Heart left ventricle (tissue), 16 donors: ENCODE measurements at regions of chr13 and their contacts with region 1.

Region 1: DNA sequence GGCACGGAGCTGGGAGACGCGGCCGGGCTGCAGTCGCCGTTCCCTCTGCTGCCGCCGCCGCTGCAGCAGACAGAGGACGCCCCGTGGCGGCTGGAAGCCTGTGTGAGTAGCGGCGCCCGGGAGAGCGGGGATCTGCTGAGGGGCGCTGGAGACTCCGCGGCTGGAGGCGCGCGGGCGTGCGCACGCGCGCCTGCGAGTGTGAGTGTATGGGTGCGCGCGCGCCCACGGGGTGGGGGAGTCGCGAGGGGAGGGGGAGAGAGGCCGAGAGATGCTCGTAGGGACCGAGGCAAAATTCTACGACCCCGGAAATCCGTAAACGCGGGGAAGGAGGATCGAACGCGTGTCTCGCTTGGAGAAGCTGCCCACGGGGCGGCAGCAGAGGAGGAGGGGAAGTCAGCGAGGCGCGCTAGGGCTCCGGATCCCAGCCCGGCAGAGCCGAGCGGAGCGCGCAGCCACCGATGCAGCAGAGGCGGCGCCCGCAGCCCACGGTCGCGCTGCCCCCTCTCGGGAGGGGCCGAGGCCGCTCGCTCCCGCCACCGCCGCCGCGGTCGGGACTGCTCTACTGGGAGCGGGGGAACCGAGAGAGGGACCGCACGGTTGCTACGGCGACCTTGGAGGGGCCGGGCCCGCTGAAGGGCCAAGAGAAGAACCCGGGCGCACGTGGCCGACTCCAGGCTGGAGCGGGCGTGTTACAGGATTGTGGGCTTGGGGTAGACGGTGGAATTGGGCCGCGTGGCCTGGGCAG is at the start of gene ENOX1:
- DNase-seq: peak; percentile 68 to 87 (median 81)
- ATAC-seq: peak; percentile 57 to 85 (median 84)
- H3K4me3 ChIP-seq: peak within 1 kb of the TSS; percentile 39 to 86 (median 70)
- H3K27ac ChIP-seq: peak within 1 kb of the TSS; percentile 35 to 88 (median 82)
- H3K4me1 ChIP-seq: peaks cover 0 to 38% (median 9%) of the 10 kb centered on the region in 12 donors
- H3K27me3 ChIP-seq: peaks cover 0 to 35% (median 0%) of the 10 kb centered on the region in 9 donors
- CTCF ChIP-seq: peak in 10 of 12 donors; percentile 5 to 49 (median 34)
- POLR2A ChIP-seq: no peak
- total RNA-seq, gene ENOX1: 3.7 to 10.1 (median 5.5) TPM

Region 2: DNA sequence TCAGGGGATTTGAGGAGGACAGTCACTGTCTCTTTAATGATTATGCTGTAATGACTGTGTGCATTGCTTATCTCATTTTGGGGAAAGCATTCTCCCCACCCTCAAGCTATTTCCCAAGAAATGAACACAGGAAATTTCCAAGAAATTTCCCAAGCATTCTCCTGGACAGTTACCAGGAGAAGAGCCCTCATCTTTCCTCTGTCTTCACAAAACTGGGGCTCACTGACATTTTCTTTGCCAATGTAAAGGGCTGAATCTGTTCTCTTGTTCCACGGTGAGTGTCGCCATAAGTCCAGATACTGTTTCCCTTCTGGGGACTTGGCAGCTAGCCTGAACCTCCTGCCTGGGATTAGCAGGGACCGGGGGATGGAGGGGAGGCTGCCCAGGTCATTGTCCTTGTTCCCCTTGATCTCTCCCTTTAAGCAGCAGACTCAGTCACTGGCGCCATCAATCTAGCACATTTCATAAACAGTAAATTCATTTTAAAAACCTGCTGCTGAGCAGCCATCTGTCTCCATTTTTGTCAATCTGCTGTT is 590.8 kb before region 1 on chr13:
- intact Hi-C with region 1: loop called in 3 of 10 experiments (anchors 5 to 10 kb)
- DNase-seq: peak in 4 of 5 donors; percentile 60 to 73 (median 60)
- ATAC-seq: peak; percentile 44 to 85 (median 80)
- H3K4me3 ChIP-seq: peak overlapping the region in 1 of 12 donors; percentile 1
- H3K27ac ChIP-seq: no peak overlapping the region
- H3K4me1 ChIP-seq: peaks cover 0 to 14% (median 0%) of the 10 kb centered on the region in 12 donors
- H3K27me3 ChIP-seq: peaks cover 0 to 4% (median 0%) of the 10 kb centered on the region in 9 donors
- CTCF ChIP-seq: peak in 7 of 12 donors; percentile 9 to 54 (median 34)
- POLR2A ChIP-seq: no peak

Region 3: GRCh38 chr13:43473437-43473836 is 313.5 kb before region 1 on chr13:
- intact Hi-C with region 1: loop called in 1 of 10 experiments (anchors 10 kb)
- DNase-seq: peak in 1 of 5 donors; percentile 23
- ATAC-seq: peak; percentile 67 to 86 (median 79)
- H3K4me3 ChIP-seq: no peak overlapping the region
- H3K27ac ChIP-seq: peak overlapping the region in 1 of 12 donors; percentile 24
- H3K4me1 ChIP-seq: peaks cover 0 to 39% (median 20%) of the 10 kb centered on the region in 12 donors
- H3K27me3 ChIP-seq: no peaks in the 10 kb centered on the region
- CTCF ChIP-seq: no peak
- POLR2A ChIP-seq: no peak

Region 4: GRCh38 chr13:43516401-43516833 is 270.5 kb before region 1 on chr13:
- intact Hi-C with region 1: loop called in 1 of 10 experiments (anchors 10 kb)
- DNase-seq: peak in 2 of 5 donors; percentile 12 to 27
- ATAC-seq: peak; percentile 76 to 89 (median 83)
- H3K4me3 ChIP-seq: no peak overlapping the region
- H3K27ac ChIP-seq: peak overlapping the region in 6 of 12 donors; percentile 0 to 62 (median 14)
- H3K4me1 ChIP-seq: peaks cover 0 to 32% (median 10%) of the 10 kb centered on the region in 12 donors
- H3K27me3 ChIP-seq: no peaks in the 10 kb centered on the region
- CTCF ChIP-seq: no peak
- POLR2A ChIP-seq: no peak

Region 5: DNA sequence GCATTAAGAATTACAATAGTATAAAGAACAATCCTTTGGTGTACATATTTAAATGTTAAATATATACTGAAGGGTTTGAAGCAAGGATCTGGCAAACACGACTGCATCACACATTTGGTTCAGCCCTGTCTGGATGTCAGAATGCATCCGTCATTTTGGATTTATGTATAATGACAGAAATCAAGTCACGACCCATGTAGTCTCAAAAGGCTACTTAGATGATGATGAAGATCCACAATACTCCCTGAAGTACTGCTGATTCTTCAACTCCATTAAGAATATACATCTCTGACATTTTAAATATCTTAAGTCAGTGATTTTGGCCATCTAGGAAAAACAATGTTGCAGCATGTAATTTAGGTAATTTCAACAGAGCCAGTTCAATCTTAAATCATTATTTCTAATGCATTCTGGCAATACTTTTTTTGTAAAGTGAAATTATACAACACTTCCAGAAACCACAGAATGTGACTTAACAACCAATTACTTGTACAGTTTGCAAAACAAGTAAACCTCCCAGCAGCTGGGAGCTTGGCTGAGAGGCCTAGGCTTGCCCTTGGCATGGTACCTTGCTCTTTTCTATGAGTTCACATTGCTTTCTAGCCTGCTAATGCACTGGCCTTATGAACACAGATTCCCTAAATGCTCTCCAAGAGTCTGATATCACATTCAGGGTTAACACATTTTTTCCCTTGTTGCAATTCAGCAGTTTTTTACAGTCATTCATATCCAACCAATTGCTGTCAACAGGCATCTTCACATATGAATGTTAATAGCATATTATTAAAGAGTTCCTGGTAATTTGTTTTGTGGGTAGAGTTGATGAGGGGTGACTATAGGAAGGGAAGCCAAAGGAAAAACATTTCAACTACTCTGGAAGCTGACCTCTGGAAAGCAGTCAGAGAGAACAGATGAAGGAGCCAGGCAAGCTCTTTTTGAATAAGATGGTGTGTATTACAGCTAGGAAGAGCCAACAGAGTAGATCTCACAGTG is 175.4 kb before region 1 on chr13:
- intact Hi-C with region 1: loop called in 1 of 10 experiments (anchors 5 kb)
- DNase-seq: no peak
- ATAC-seq: peak in 1 of 4 donors; percentile 21
- H3K4me3 ChIP-seq: no peak overlapping the region
- H3K27ac ChIP-seq: peak overlapping the region in 1 of 12 donors; percentile 19
- H3K4me1 ChIP-seq: peaks cover 0 to 23% (median 9%) of the 10 kb centered on the region in 12 donors
- H3K27me3 ChIP-seq: no peaks in the 10 kb centered on the region
- CTCF ChIP-seq: no peak
- POLR2A ChIP-seq: no peak